ENCODE measurements at regions of chr14 and their contacts with region 1.

Region 1: GRCh38 chr14:71855399-71856036 is 76.7 kb upstream of the RGS6 start:
- DNase-seq: peak; percentile 68 to 71
- H3K4me3 ChIP-seq: no peak overlapping the region
- H3K27ac ChIP-seq: no peak overlapping the region
- H3K4me1 ChIP-seq: no peaks in the 10 kb centered on the region
- H3K27me3 ChIP-seq: no peaks in the 10 kb centered on the region
- CTCF ChIP-seq: peak; percentile 31 to 58 (median 48)
- POLR2A ChIP-seq: no peak

Region 2: GRCh38 chr14:71418532-71419245 is 436.8 kb before region 1 on chr14:
- intact Hi-C with region 1: no loop called
- DNase-seq: no peak
- H3K4me3 ChIP-seq: no peak overlapping the region
- H3K27ac ChIP-seq: peak overlapping the region; percentile 42 to 83 (median 67)
- H3K4me1 ChIP-seq: peaks cover 28 to 34% of the 10 kb centered on the region in 2 donors
- H3K27me3 ChIP-seq: no peaks in the 10 kb centered on the region
- CTCF ChIP-seq: no peak
- POLR2A ChIP-seq: no peak

Region 3: DNA sequence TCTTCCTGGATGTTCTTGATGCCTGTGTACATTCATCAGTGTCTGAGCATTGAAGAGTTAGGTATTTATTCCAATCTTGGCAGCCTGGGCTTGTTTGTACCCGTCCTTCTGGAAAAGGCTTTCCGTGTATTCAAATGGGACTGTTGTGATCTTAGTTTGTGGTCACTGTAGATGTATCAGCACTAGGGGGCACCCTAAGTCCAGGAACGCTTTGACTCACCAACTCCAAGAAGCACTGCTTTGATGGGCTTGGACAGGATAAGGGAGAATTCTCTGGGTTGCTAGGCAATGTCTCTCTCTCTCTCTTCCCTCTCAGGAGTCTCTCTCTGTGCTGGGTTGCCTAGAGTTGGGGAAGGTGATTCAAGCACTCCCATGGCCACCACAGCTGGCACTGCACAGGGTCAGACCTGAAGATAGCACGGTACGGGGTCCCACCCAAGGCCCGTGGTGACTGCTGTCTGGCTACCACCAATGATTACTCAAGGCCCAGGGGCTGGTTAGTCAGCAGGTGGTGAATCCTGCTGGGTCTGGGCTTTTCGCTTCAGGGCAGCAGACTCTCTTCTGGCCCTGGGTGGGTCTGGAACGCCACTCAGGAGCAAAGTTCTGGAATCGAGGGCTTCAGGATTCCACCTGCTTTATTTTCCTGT is 134.4 kb before region 1 on chr14:
- intact Hi-C with region 1: loop called (anchors 5 kb)
- DNase-seq: peak; percentile 23 to 37
- H3K4me3 ChIP-seq: no peak overlapping the region
- H3K27ac ChIP-seq: no peak overlapping the region
- H3K4me1 ChIP-seq: no peaks in the 10 kb centered on the region
- H3K27me3 ChIP-seq: no peaks in the 10 kb centered on the region
- CTCF ChIP-seq: peak in 5 of 6 experiments; percentile 8 to 61 (median 49)
- POLR2A ChIP-seq: no peak